GM12878 (cell line): ENCODE measurements at regions of chr1 and their contacts with region 1.

Region 1: DNA sequence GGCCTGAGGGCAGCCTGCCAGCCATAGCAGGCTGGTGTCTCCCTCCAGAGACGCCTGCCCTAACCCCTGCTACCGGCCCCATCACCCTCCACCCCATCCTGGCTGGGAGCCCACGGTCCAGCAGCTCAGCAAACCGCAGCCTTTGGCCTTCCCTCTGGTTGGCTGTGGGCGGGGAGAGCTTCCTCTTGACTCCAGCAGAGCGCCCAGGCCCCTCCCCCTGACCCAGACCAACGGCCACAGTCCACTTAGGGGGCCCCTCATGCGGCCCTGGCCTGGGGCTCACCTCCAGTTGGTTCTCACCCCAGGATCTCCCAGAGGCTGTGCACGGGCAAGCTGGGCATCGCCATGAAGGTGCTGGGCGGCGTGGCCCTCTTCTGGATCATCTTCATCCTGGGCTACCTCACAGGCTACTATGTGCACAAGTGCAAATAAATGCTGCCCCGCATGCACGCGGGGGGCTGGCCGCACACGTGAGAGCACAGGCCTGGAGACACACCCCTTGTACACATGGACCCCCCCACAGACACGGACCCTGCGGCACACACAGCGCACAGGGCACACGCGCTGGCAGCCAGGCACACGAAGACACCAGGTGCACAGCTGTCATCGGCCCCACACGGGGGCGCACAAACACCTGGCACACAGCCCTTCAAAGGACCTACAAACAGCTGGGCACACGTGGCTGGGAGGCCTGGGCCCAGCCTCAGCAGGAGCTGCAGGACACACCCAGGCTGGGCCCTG is 3.1 kb downstream of the SMIM1 start:
- DNase-seq: no peak
- ATAC-seq: peak; percentile 68
- H3K4me3 ChIP-seq: no peak overlapping the region
- H3K27ac ChIP-seq: no peak overlapping the region
- H3K4me1 ChIP-seq: peaks cover 15% of the 10 kb centered on the region
- H3K27me3 ChIP-seq: no peaks in the 10 kb centered on the region; a peak in 1 of 4 replicates
- CTCF ChIP-seq: peak; percentile 74 to 80 (median 79)
- EP300 ChIP-seq: no peak
- POLR2A ChIP-seq: no peak
- RAD21 ChIP-seq: peak; percentile 75

Region 2: DNA sequence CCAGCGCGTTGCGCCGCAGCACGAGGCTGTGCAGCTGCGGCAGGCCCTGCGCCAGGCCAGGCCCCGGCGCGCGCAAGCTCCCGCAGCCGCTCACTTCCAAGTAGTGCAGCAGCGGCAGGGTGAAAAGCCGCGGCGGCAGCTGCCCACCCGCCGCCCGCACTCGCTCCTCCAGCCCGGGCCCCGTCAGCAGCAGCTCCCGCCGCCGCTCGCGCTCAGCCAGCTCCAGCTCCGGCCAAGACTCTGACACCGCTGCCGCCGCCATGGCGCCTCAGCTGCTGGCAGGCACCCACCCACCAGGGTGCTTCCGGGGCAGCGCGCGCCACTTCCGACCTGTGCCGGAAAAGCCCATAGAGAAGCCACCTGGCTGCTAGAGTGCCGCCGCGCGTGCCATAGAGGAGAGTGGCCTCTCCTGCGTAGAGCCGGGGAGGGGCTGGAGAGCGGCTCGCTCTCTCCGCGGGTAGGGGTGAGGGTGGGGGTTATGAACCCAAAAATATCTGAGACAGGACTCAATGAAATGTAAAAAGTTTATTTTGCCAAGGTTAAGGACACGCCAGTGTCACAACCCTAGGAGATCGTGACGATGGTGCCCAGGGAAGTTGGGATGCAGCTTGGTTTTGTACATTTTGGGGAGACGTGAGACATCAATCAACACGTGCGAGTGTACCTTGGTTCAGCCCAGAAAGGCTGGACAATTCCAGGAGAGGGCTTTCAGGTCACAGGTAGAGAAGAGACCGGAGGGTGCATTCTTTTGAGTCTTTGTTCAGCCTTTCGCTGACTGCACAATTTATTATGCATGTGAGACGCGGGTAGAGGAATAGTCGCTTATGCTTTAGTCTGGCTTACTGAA is 20.8 kb after region 1 on chr1 and contains the start of gene LRRC47:
- CTCF ChIA-PET with region 1: interaction called, 8 read pairs
- POLR2A ChIA-PET with region 1: interaction called, 4 read pairs
- RAD21 ChIA-PET with region 1: interaction called, 12 read pairs
- SMC1A ChIA-PET with region 1: no interaction called
- in situ Hi-C with region 1: no loop called
- intact Hi-C with region 1: loop called (anchors 1 kb)
- DNase-seq: peak; percentile 58
- ATAC-seq: peak; percentile 99
- H3K4me3 ChIP-seq: peak within 1 kb of the TSS; percentile 70
- H3K27ac ChIP-seq: peak within 1 kb of the TSS; percentile 51
- H3K4me1 ChIP-seq: peaks cover 18% of the 10 kb centered on the region
- H3K27me3 ChIP-seq: no peaks in the 10 kb centered on the region
- CTCF ChIP-seq: no peak
- EP300 ChIP-seq: peak; percentile 8 to 34; a peak in 1 of 4 replicates
- POLR2A ChIP-seq: peak; percentile 95
- RAD21 ChIP-seq: no peak
- polyA plus RNA-seq, gene LRRC47: 2.5 to 4.5 TPM

Region 3: DNA sequence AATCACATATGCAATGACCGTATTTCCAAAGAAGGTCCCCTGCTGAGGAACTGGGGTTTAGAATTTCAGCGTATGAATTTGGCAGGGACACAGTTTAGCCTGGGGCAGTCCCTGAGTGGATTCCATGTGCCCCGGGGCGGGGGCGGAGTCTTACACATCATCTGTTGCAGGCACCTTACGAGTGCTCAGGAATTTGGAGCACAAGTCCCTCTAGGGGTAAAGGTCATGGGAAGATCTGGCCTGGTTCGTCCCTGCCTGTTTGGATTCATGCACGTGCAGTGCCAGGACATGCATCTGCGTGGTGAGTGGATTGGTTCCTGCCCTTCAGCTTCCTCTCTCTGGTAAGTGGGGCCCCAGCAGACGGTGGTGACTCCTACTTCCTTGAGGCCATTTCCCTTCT is 332.7 kb after region 1 on chr1:
- CTCF ChIA-PET with region 1: no interaction called
- POLR2A ChIA-PET with region 1: no interaction called
- RAD21 ChIA-PET with region 1: no interaction called
- SMC1A ChIA-PET with region 1: no interaction called
- in situ Hi-C with region 1: no loop called
- intact Hi-C with region 1: no loop called
- DNase-seq: no peak
- ATAC-seq: no peak
- H3K4me3 ChIP-seq: no peak overlapping the region
- H3K27ac ChIP-seq: no peak overlapping the region
- H3K4me1 ChIP-seq: no peaks in the 10 kb centered on the region
- H3K27me3 ChIP-seq: no peaks in the 10 kb centered on the region
- CTCF ChIP-seq: no peak
- EP300 ChIP-seq: no peak
- POLR2A ChIP-seq: no peak
- RAD21 ChIP-seq: no peak